Activated CD8-positive, alpha-beta T cell treated with anti-CD3 and anti-CD28 coated beads, Interleukin-2, amount 10 ng/mL, durations not matched to agents 7 days and 5 days (primary cell): ENCODE measurements at regions of chr15 and their contacts with region 1.

Region 1: GRCh38 chr15:63833021-63833696 is 589 bp downstream of the HERC1 start:
- DNase-seq: peak; percentile 49
- ATAC-seq: peak; percentile 69
- H3K4me3 Mint-ChIP-seq: peak overlapping the region; percentile 88
- H3K27ac Mint-ChIP-seq: peak overlapping the region; percentile 84
- H3K4me1 Mint-ChIP-seq: peaks cover 43% of the 10 kb centered on the region
- H3K27me3 Mint-ChIP-seq: peaks cover 8% of the 10 kb centered on the region

Region 2: GRCh38 chr15:63818191-63818590 is 15.0 kb before region 1 on chr15:
- CTCF ChIA-PET with region 1: interaction called, 12 read pairs
- POLR2A ChIA-PET with region 1: no interaction called
- DNase-seq: no peak
- ATAC-seq: no peak
- H3K4me3 Mint-ChIP-seq: no peak overlapping the region
- H3K27ac Mint-ChIP-seq: peak overlapping the region; percentile 24
- H3K4me1 Mint-ChIP-seq: peaks cover 49% of the 10 kb centered on the region
- H3K27me3 Mint-ChIP-seq: no peaks in the 10 kb centered on the region

Region 3: GRCh38 chr15:63881431-63881830 is 48.3 kb after region 1 on chr15:
- CTCF ChIA-PET with region 1: no interaction called
- POLR2A ChIA-PET with region 1: no interaction called
- DNase-seq: no peak
- ATAC-seq: no peak
- H3K4me3 Mint-ChIP-seq: no peak overlapping the region
- H3K27ac Mint-ChIP-seq: no peak overlapping the region
- H3K4me1 Mint-ChIP-seq: peaks cover 4% of the 10 kb centered on the region
- H3K27me3 Mint-ChIP-seq: no peaks in the 10 kb centered on the region

Region 4: DNA sequence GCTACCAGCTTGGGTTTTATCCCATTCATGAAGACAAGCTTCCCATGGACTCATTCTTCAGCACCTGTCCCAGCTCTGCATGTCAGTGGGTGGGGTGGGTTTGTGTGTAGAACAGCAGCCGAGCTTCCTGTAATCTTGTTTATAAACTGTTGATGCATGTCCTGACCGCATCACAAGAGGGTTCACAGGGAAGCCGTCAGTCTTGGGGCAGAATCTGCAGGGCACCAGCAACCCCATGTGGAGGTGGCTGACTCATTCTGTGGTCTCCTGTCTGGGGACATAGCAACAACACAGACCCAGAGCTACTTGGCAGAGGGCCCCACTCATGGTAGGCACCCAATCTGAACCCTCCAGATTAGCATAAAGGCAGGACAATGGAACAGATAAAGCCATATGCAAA is 177.6 kb after region 1 on chr15:
- CTCF ChIA-PET with region 1: interaction called, 10 read pairs
- POLR2A ChIA-PET with region 1: interaction called, 3 read pairs
- DNase-seq: peak; percentile 92
- ATAC-seq: peak; percentile 100
- H3K4me3 Mint-ChIP-seq: peak overlapping the region; percentile 7
- H3K27ac Mint-ChIP-seq: peak overlapping the region; percentile 75
- H3K4me1 Mint-ChIP-seq: peaks cover 37% of the 10 kb centered on the region
- H3K27me3 Mint-ChIP-seq: peaks cover 5% of the 10 kb centered on the region